Dorsolateral prefrontal cortex (tissue), 120 donors: ENCODE measurements at regions of chrX and their contacts with region 1.

Region 1: GRCh38 chrX:2498781-2499302 is 1.9 kb downstream of the DHRSX start:
- DNase-seq: peak in 2 of 10 donors; percentile 29 to 49
- H3K4me3 ChIP-seq: peak overlapping the region in 58 of 59 donors; percentile 0 to 88 (median 72)
- H3K27ac ChIP-seq: peak overlapping the region; percentile 13 to 94 (median 79)
- H3K27me3 ChIP-seq: no peaks in the 10 kb centered on the region
- CTCF ChIP-seq: no peak

Region 2: DNA sequence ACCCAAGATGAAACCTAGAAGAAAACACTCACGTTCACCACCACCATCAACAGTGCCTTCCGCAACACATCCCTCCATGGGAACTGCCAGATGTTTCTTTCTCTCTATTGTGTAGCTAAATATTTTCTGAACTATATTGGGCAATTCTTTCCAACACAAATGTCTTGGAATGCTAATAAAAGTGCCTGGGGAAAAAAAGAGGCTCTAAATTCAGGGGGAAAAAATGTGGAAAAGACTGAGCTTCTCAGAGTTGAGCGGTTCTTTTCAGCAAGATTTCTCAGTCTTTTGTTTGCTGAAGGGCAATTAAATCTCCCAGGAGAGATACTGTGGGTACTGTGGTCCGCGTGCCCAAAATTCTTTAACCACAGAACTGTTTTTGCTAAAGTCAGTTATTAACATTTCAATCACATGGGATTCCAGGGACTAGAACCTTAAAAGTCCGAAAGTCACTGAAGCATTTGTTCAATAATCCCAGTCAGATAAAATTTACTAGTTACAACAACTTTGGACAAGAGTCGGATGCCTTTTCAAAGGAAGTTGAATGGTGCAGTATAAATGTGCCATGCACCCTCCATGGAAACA is 53.9 kb after region 1 on chrX:
- intact Hi-C with region 1: no loop called
- DNase-seq: no peak
- H3K4me3 ChIP-seq: no peak overlapping the region
- H3K27ac ChIP-seq: no peak overlapping the region
- H3K27me3 ChIP-seq: peaks cover 0 to 75% (median 18%) of the 10 kb centered on the region in 45 donors
- CTCF ChIP-seq: no peak

Region 3: GRCh38 chrX:2589186-2590030 is 90.6 kb after region 1 on chrX:
- intact Hi-C with region 1: loop called in 1 of 2 experiments (anchors 5 kb)
- DNase-seq: no peak
- H3K4me3 ChIP-seq: no peak overlapping the region
- H3K27ac ChIP-seq: no peak overlapping the region
- H3K27me3 ChIP-seq: peaks cover 0 to 52% (median 20%) of the 10 kb centered on the region in 45 donors
- CTCF ChIP-seq: no peak

Region 4: GRCh38 chrX:3119376-3119775 is 620.5 kb after region 1 on chrX:
- intact Hi-C with region 1: no loop called
- DNase-seq: no peak
- H3K4me3 ChIP-seq: no peak overlapping the region
- H3K27ac ChIP-seq: no peak overlapping the region
- H3K27me3 ChIP-seq: peaks cover 0 to 13% (median 0%) of the 10 kb centered on the region in 45 donors
- CTCF ChIP-seq: no peak